Calu3 (cell line): ENCODE measurements at regions of chr15 and their contacts with region 1.

Region 1: DNA sequence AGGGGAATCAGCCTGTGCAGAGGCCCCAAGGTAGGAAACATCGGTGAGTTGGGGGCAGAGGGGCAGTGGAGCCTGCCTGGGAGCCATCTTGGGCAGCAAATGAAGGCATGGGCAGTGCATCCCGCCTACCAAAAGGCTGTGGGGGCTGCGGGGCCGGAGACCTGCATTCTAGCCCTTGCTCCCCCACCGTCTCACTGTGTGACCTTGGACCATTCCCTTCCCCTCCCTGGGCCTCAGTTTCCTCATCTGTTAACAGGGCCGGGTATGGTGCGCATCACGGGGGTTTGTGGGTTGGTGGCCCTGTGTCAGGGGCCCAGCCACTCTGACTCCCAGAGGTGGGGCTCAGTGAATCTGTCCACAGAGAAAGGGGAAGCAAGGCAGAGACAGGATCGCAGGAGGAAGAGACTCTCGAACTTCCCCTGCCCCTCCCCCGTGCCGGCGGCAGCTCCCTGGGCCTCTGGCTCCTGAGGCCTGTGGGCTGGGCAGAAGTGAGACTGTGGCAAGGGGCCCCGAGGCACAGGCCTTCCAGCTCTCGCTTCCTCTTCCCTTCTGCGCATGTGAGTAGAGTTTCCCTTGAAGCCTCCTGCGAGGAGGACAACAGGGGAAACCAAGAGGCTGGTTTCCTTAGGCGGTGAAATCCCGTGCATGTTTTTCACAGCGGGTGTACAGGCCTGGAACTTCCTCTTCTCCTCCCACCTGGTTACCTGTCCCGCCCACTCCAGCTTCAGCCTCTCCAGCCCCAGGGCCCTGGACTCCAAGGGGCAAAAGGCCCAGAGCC is 42.9 kb downstream of the IDH2 start:
- DNase-seq: no peak
- H3K4me3 Mint-ChIP-seq: no peak overlapping the region
- H3K27ac Mint-ChIP-seq: no peak overlapping the region
- H3K4me1 Mint-ChIP-seq: peaks cover 13% of the 10 kb centered on the region
- H3K27me3 Mint-ChIP-seq: no peaks in the 10 kb centered on the region
- CTCF ChIP-seq: no peak

Region 2: GRCh38 chr15:90001683-90002427 is 57.5 kb before region 1 on chr15:
- CTCF ChIA-PET with region 1: interaction called, 4 read pairs
- intact Hi-C with region 1: loop called (anchors 10 kb)
- DNase-seq: peak; percentile 61
- H3K4me3 Mint-ChIP-seq: peak overlapping the region; percentile 71
- H3K27ac Mint-ChIP-seq: peak overlapping the region; percentile 81
- H3K4me1 Mint-ChIP-seq: peaks cover 37% of the 10 kb centered on the region
- H3K27me3 Mint-ChIP-seq: no peaks in the 10 kb centered on the region
- CTCF ChIP-seq: no peak

Region 3: DNA sequence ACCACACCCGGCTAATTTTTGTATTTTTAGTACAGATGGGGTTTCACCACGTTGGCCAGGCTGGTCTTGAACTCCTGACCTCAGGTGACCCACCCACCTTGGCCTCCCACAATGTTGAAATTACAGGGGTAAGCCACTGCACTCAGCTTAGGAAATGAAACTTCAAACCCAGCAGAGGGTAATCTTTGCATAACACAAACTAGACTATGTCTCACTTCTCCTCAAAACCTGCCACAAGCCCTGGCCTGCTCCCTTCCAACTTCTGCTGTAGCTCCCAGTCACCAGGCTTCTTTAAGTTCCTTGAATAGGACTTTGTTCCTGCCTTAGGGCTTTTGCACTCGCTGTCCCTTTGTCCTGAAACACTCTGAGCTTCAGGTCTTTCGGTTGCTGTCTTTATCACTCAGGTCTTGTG is 102.6 kb after region 1 on chr15:
- CTCF ChIA-PET with region 1: interaction called, 10 read pairs
- intact Hi-C with region 1: no loop called
- DNase-seq: no peak
- H3K4me3 Mint-ChIP-seq: no peak overlapping the region
- H3K27ac Mint-ChIP-seq: peak overlapping the region; percentile 22
- H3K4me1 Mint-ChIP-seq: peaks cover 82% of the 10 kb centered on the region
- H3K27me3 Mint-ChIP-seq: no peaks in the 10 kb centered on the region
- CTCF ChIP-seq: no peak